ENCODE measurements at regions of chr9 and their contacts with region 1.

Region 1: DNA sequence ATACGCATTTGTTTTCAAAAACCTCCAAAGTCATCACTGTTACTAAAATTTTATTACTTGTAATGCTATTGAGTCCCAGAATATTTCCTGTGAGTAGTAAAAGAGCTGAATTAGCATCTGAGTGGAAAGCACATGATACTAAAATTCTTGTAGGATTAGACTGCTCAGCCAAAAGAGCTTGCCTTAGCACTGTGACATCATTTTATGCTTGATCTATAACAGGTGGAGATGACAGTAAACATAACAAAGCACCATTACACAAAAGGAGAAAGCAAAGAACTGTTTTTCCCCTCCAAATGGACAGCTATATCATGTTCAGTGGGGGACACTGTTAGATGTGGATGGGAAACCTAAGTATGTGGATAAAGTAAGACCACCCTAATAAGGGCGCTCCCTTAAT is 5.8 kb upstream of the JAK2 start:
- DNase-seq: no peak
- ATAC-seq: no peak
- H3K4me3 Mint-ChIP-seq: no peak overlapping the region
- H3K27ac Mint-ChIP-seq: no peak overlapping the region
- H3K4me1 Mint-ChIP-seq: peaks cover 50% of the 10 kb centered on the region
- H3K27me3 Mint-ChIP-seq: no peaks in the 10 kb centered on the region

Region 2: GRCh38 chr9:4555251-4555650 is 424.0 kb before region 1 on chr9:
- CTCF ChIA-PET with region 1: no interaction called
- POLR2A ChIA-PET with region 1: no interaction called
- intact Hi-C with region 1: no loop called
- DNase-seq: no peak
- ATAC-seq: peak; percentile 30
- H3K4me3 Mint-ChIP-seq: no peak overlapping the region
- H3K27ac Mint-ChIP-seq: no peak overlapping the region
- H3K4me1 Mint-ChIP-seq: peaks cover 39% of the 10 kb centered on the region
- H3K27me3 Mint-ChIP-seq: no peaks in the 10 kb centered on the region

Region 3: DNA sequence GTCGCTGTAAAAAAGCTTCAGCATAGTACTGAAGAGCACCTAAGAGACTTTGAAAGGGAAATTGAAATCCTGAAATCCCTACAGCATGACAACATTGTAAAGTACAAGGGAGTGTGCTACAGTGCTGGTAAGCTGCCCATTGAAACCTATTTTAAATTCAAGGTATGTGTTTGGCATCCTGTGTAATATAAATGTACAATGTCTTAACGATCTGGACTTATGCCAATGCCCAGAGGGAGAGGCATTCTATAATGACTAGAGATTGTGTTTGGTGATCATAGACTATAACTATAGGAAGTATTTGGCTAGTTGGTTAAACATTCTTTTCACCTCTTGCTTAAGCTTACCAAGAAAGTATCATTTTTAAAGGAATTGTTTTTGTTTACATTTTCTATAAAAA is 110.5 kb after region 1 on chr9:
- CTCF ChIA-PET with region 1: no interaction called
- POLR2A ChIA-PET with region 1: no interaction called
- intact Hi-C with region 1: no loop called
- DNase-seq: no peak
- ATAC-seq: no peak
- H3K4me3 Mint-ChIP-seq: no peak overlapping the region
- H3K27ac Mint-ChIP-seq: no peak overlapping the region
- H3K4me1 Mint-ChIP-seq: no peaks in the 10 kb centered on the region
- H3K27me3 Mint-ChIP-seq: no peaks in the 10 kb centered on the region

Region 4: GRCh38 chr9:6686396-6686795 is 1707.2 kb after region 1 on chr9:
- CTCF ChIA-PET with region 1: no interaction called
- POLR2A ChIA-PET with region 1: no interaction called
- intact Hi-C with region 1: loop called in 1 of 2 experiments (anchors 5 kb)
- DNase-seq: no peak
- ATAC-seq: no peak
- H3K4me3 Mint-ChIP-seq: no peak overlapping the region
- H3K27ac Mint-ChIP-seq: no peak overlapping the region
- H3K4me1 Mint-ChIP-seq: peaks cover 14% of the 10 kb centered on the region
- H3K27me3 Mint-ChIP-seq: no peaks in the 10 kb centered on the region